Activated naive CD8-positive, alpha-beta T cell treated with anti-CD3 and anti-CD28 coated beads, Interleukin-2, amount 10 ng/mL, durations not matched to agents 7 days and 5 days (primary cell): ENCODE measurements at regions of chr19 and their contacts with region 1.

Region 1: GRCh38 chr19:45439569-45440254 is 16.0 kb upstream of the ERCC1 start:
- DNase-seq: peak; percentile 92
- ATAC-seq: peak; percentile 84
- H3K4me3 Mint-ChIP-seq: peak overlapping the region; percentile 85
- H3K27ac Mint-ChIP-seq: peak overlapping the region; percentile 90
- H3K4me1 Mint-ChIP-seq: peaks cover 21% of the 10 kb centered on the region
- H3K27me3 Mint-ChIP-seq: no peaks in the 10 kb centered on the region

Region 2: GRCh38 chr19:45323671-45324081 is 116.0 kb before region 1 on chr19:
- POLR2A ChIA-PET with region 1: no interaction called
- DNase-seq: no peak
- ATAC-seq: no peak
- H3K4me3 Mint-ChIP-seq: no peak overlapping the region
- H3K27ac Mint-ChIP-seq: no peak overlapping the region
- H3K4me1 Mint-ChIP-seq: peaks cover 5% of the 10 kb centered on the region
- H3K27me3 Mint-ChIP-seq: peaks cover 38% of the 10 kb centered on the region

Region 3: GRCh38 chr19:45469132-45469944 is 29.6 kb after region 1 on chr19:
- POLR2A ChIA-PET with region 1: interaction called, 54 read pairs
- DNase-seq: peak; percentile 96
- ATAC-seq: peak; percentile 62
- H3K4me3 Mint-ChIP-seq: peak overlapping the region; percentile 93
- H3K27ac Mint-ChIP-seq: peak overlapping the region; percentile 97
- H3K4me1 Mint-ChIP-seq: peaks cover 16% of the 10 kb centered on the region
- H3K27me3 Mint-ChIP-seq: peaks cover 41% of the 10 kb centered on the region

Region 4: GRCh38 chr19:45478454-45479238 is 38.9 kb after region 1 on chr19:
- POLR2A ChIA-PET with region 1: interaction called, 95 read pairs
- DNase-seq: peak; percentile 88
- ATAC-seq: peak; percentile 79
- H3K4me3 Mint-ChIP-seq: peak overlapping the region; percentile 71
- H3K27ac Mint-ChIP-seq: peak overlapping the region; percentile 92
- H3K4me1 Mint-ChIP-seq: peaks cover 24% of the 10 kb centered on the region
- H3K27me3 Mint-ChIP-seq: peaks cover 26% of the 10 kb centered on the region

Region 5: GRCh38 chr19:45485305-45486077 is 45.8 kb after region 1 on chr19:
- POLR2A ChIA-PET with region 1: interaction called, 13 read pairs
- DNase-seq: peak; percentile 98
- ATAC-seq: peak; percentile 97
- H3K4me3 Mint-ChIP-seq: peak overlapping the region; percentile 92
- H3K27ac Mint-ChIP-seq: peak overlapping the region; percentile 86
- H3K4me1 Mint-ChIP-seq: peaks cover 9% of the 10 kb centered on the region
- H3K27me3 Mint-ChIP-seq: peaks cover 2% of the 10 kb centered on the region

Region 6: DNA sequence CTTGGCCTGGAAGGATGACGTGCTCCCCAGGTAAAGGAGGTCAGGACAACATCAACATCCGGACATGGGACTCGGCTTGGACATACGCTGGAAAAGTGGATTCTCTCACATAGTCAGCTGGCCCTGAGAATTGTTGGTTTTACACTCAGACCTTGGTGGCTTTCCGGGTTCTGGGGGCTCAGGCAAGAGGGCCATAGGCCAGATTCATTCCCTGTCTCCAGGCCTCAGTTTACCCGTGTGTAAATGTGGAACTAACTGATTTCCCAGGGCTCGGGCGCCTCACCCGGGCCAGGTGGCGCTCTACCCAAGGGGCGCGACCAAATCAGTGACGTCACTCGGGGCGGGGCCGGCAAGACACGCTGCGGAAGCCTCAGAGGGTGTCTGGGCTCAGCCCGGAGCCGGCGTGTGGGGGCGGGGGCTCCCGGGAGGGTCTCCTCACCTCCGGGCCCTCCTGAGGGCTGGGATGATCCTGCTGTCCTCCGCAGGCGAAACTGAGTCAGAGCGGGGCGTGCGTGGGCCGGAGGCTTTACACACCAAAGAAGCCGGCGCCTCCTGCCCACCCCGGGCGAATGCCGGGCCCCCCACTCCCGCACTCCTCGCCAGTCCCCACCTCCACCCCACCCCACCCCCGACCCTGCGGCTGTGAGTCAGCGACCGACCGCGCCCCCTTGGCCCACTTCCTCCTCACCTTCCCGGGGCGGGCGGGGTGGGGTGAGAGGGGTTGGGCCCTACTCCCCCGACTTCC is 66.7 kb after region 1 on chr19:
- POLR2A ChIA-PET with region 1: no interaction called
- DNase-seq: peak; percentile 99
- ATAC-seq: peak; percentile 72
- H3K4me3 Mint-ChIP-seq: peak overlapping the region; percentile 87
- H3K27ac Mint-ChIP-seq: peak overlapping the region; percentile 96
- H3K4me1 Mint-ChIP-seq: peaks cover 25% of the 10 kb centered on the region
- H3K27me3 Mint-ChIP-seq: no peaks in the 10 kb centered on the region